Cardiac septum (tissue), 1 donor: ENCODE measurements at regions of chr18 and their contacts with region 1.

Region 1: GRCh38 chr18:61893971-61894750 is 1.4 kb upstream of the RNF152 start:
- DNase-seq: peak; percentile 93

Region 2: GRCh38 chr18:61575419-61575818 is 318.7 kb before region 1 on chr18:
- intact Hi-C with region 1: loop called (anchors 10 kb)
- DNase-seq: no peak

Region 3: DNA sequence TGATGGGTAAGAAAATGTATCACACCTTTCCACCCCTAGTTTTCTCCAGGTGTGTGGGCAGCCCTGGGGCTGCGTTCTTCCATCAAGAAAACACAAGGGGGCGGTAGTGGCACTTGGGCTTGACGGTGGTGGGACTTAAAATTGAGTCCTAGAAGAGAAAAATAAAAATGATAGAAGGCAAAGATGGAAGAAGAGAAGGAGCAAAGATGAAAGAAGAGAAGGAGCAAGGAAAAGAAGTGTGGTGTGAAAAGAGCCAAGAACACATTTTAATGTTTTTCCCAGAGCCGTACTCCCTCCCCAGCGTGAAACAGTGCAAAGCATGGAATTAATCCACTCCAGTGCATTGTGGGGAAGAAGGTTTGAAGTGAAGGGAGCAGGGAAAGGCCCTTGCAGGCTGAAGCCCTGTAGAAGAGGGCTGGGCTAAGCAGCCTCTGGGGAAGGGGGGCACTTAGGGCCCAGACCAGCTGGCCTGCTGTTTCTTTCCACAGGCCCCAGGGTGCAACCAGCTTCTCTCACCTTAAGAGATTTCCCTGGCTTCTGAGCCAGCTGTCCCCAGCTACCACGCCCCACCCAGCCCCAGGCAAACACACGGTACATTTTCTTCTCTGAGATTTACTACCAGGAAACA is 258.1 kb before region 1 on chr18:
- intact Hi-C with region 1: loop called (anchors 2 kb)
- DNase-seq: no peak

Region 4: DNA sequence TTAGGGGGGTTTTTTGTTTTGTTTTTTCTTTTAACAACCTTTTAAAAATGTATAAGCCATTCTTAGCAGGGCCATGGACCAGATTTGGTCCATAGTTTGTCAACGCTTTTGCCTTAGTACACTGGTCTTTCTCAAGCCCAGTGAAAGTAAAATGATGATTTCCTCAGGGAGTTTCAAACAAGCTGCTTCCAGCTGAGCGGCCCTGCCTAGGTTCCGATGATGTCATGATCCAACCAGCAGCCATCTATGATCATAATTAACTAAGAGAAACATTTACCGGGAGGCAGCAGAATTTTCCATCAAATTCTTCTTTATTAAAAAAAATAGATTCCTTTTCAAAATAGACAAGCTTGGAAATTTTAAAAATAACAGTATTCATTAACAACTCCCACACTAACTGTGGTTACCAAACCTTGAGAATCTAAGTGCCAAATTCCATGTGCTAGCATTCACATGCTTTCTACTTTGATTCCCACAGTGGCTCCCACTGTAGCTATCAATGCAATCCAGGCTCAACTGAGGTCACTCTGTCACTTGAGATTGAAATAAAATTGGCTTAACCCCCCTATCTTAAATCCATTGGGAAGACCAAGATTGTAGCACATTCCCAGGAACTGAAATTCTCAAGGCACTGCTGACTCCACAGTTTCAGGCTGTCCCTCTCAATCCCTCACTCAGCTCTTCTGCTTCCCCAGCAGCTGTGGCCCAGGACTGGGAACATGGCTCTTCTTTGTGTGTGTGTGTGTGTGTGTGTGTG is 150.2 kb before region 1 on chr18:
- intact Hi-C with region 1: loop called (anchors 5 kb)
- DNase-seq: no peak

Region 5: DNA sequence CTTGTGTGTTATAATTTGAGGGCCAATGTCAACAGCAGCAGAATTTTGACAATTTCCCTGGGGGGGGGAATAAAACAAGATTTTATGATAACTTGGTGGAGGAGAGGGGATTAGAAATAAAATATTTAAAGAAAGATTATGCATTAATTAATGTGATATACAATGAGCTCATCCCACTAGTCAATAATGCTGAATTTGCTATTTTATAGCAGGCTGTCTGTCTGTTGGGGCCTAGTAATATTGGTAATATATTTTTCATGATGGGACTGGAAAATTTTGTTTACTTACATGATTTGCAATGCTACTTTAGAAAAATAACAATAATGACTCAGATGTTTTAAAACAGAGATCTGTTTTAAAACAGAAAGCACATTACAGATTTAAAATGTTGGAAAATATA is 119.3 kb before region 1 on chr18:
- intact Hi-C with region 1: no loop called
- DNase-seq: no peak